Esophagus muscularis mucosa (tissue), 4 donors: ENCODE measurements at regions of chr17 and their contacts with region 1.

Region 1: DNA sequence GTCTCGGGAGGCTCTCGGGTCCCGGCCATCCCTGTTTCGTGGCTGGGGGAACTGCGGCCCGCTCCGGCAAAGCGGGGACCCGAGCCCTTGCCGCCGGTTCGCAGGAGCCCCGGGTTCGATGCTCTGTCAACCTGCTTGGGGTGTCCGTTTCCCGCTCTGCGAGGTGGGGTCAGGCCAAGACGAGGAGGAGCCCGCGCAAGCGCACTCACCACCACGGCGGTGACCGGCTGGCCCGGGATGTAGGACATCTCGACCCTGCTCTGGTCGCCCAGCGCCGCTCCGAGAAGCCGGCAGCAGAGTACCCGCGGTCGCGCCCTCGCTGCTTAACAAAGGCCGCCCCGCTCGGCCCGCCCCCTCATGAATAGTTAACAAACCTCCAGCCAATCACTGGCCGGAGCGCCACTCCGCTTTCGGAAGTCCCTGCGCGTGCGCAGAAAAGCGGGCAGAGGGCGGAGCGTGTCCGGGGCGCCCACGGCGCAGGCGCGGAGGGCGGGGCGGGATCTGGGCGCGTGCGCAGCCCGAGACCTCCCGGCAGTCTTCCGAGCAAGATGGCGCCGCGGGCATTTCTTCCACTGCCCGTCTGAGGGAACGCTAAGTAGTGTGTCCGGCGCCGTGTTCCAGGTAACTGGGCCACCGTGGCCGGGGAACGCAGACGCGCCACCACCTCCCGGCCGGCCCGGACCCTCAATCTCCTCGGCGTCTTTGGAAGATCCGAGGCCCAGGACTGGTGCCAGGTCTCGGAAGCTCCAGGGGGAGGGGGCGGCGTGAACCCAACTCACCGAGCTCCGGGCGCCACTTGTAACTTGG is at the starts of genes EMC6 and TAX1BP3:
- DNase-seq: peak; percentile 99
- H3K4me3 ChIP-seq: peak within 1 kb of the TSS; percentile 92 to 99 (median 96)
- H3K27ac ChIP-seq: peak within 1 kb of the TSS; percentile 95 to 99 (median 98)
- H3K4me1 ChIP-seq: peaks cover 34 to 48% (median 42%) of the 10 kb centered on the region in 4 donors
- H3K27me3 ChIP-seq: no peaks in the 10 kb centered on the region
- CTCF ChIP-seq: peak in 1 of 3 experiments; percentile 2
- EP300 ChIP-seq: no peak
- POLR2A ChIP-seq: peak; percentile 87
- total RNA-seq, gene EMC6: 15.8 to 38.2 (median 23.6) TPM
- total RNA-seq, gene TAX1BP3: 98.0 to 175 (median 115) TPM

Region 2: DNA sequence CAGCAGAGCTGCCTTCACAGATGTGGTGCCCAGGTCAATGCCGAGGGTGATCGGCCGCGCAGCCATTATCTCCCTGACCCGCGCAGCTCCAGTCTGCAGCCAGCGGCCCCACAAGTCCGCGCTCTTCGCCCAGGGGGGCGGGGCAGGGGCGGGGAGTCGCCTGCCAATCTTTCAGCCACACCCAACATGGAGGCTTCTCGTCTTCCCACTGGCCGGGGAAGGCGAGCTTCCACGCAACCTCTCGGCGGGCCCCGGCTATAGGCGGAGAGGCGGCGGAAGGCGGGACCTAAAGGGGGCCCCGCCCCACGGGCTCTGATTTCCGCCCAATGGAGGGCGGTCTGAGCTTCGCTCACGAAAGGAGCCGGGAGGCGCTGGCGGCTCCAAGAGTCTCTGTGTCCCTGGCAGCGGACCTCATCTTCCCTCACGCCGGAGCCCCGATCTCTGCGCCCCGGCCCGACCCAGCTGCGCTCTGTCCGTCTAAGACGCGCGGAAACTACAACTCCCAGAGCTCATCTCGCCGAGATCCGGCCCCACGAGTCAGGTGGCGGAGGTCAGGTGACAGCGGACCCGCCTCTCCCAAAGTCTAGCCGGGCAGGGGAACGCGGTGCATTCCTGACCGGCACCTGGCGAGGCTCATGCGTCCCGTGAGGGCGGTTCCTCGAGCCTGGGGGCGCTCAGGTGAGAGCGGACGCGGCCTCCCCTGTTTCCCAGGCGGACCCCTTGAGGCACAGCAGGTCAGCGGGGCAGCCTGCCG is 32.2 kb before region 1 on chr17 and contains the starts of genes CTNS and SHPK:
- intact Hi-C with region 1: loop called (anchors 2 kb)
- DNase-seq: peak; percentile 99
- H3K4me3 ChIP-seq: peak within 1 kb of the TSS; percentile 65 to 99 (median 94)
- H3K27ac ChIP-seq: peak within 1 kb of the TSS; percentile 89 to 95 (median 90)
- H3K4me1 ChIP-seq: peaks cover 33 to 45% (median 39%) of the 10 kb centered on the region in 4 donors
- H3K27me3 ChIP-seq: no peaks in the 10 kb centered on the region
- CTCF ChIP-seq: peak in 1 of 3 experiments; percentile 3
- EP300 ChIP-seq: no peak
- POLR2A ChIP-seq: peak; percentile 30
- total RNA-seq, gene CTNS: 10.4 to 20.3 (median 15.5) TPM
- total RNA-seq, gene SHPK: 5.0 to 10.7 (median 5.6) TPM